ENCODE measurements at regions of chr1 and their contacts with region 1.

Region 1: GRCh38 chr1:156500797-156501499 is 373 bp upstream of the MEF2D start:
- DNase-seq: peak; percentile 94
- ATAC-seq: peak; percentile 65
- H3K4me3 Mint-ChIP-seq: peak overlapping the region; percentile 94
- H3K27ac Mint-ChIP-seq: peak overlapping the region; percentile 97
- H3K4me1 Mint-ChIP-seq: peaks cover 78% of the 10 kb centered on the region
- H3K27me3 Mint-ChIP-seq: no peaks in the 10 kb centered on the region
- CTCF ChIP-seq: no peak

Region 2: DNA sequence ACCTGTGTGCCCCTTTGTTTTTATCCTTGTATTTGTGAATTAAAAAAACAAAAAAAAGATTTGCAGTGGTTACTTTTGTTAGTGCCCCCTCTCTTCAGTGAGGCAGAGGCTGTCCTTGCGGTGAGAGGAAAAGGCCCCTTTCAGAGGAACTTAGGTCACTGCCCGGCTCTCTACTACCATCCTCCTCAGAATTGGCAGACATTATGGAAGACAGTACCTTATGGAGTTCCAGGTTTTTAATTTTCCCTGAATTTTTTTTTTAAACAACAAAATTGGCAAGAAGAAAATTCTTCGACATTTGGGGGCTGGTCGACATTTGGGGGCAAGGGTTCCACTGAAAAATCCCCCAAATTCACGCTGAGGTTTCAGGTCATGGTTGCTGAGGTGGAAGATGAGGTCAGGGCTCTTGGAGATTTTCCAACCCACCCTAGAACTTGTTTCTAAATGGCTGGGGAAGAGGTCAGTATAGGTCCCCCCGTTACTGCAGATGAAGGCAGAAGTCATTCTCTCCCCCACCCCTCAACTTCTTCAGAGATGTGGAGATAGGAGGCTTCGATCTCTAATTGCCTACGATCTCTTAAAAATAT is 554.2 kb before region 1 on chr1:
- CTCF ChIA-PET with region 1: no interaction called
- POLR2A ChIA-PET with region 1: interaction called, 15 read pairs
- intact Hi-C with region 1: no loop called
- DNase-seq: no peak
- ATAC-seq: peak; percentile 7
- H3K4me3 Mint-ChIP-seq: peak overlapping the region; percentile 46
- H3K27ac Mint-ChIP-seq: peak overlapping the region; percentile 92
- H3K4me1 Mint-ChIP-seq: peaks cover 60% of the 10 kb centered on the region
- H3K27me3 Mint-ChIP-seq: no peaks in the 10 kb centered on the region
- CTCF ChIP-seq: no peak

Region 3: DNA sequence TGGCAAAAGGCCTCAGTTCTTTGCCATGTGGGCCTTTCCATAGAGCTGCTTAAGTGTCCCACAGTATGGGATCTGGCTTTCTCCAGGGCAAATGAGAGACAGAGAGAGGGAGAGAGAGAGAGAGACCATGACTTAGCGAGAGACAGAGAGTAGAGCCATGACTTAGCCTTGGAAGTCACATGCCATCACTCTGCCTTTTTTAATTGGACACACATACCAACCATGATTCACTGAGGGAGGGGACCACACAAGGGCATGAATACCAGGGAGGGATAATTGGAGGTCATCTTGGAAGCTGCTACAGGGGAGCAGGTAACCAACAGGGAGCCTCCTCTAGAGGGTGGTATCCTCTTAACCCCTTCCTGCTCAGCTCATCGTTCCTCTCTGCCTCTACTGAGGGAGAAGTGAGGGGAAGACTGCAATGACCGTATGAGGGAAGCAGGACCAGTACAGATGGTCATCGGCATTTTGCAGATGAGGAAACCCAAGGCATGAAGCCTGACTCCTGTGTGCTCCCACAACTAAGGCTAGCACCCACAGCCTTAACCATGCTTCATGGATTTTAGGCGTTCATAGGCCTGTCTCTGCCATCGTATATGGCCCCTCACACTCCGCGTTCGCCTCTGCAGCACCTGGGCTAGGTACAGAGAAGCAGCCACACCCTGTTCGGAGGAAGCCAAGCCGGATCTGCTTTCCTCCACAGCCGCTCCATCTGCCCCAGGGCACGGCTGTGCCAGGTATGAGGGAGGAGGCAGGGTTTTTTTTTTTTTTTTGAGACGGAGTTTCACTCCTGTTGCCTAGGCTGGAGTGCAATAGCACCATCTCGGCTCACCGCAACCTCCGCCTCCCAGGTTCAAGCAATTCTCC is 38.9 kb before region 1 on chr1:
- CTCF ChIA-PET with region 1: interaction called, 9 read pairs
- POLR2A ChIA-PET with region 1: interaction called, 88 read pairs
- intact Hi-C with region 1: loop called (anchors 1 kb)
- DNase-seq: no peak
- ATAC-seq: no peak
- H3K4me3 Mint-ChIP-seq: no peak overlapping the region
- H3K27ac Mint-ChIP-seq: peak overlapping the region; percentile 1
- H3K4me1 Mint-ChIP-seq: peaks cover 9% of the 10 kb centered on the region
- H3K27me3 Mint-ChIP-seq: no peaks in the 10 kb centered on the region
- CTCF ChIP-seq: no peak

Region 4: GRCh38 chr1:156524481-156524869 is 23.5 kb after region 1 on chr1:
- CTCF ChIA-PET with region 1: interaction called, 3 read pairs
- POLR2A ChIA-PET with region 1: interaction called, 37 read pairs
- intact Hi-C with region 1: no loop called
- DNase-seq: no peak
- ATAC-seq: peak; percentile 20
- H3K4me3 Mint-ChIP-seq: peak overlapping the region; percentile 44
- H3K27ac Mint-ChIP-seq: peak overlapping the region; percentile 67
- H3K4me1 Mint-ChIP-seq: peaks cover 19% of the 10 kb centered on the region
- H3K27me3 Mint-ChIP-seq: no peaks in the 10 kb centered on the region
- CTCF ChIP-seq: no peak

Region 5: GRCh38 chr1:156583821-156584622 is 83.1 kb after region 1 on chr1:
- CTCF ChIA-PET with region 1: interaction called, 14 read pairs
- POLR2A ChIA-PET with region 1: interaction called, 90 read pairs
- intact Hi-C with region 1: loop called (anchors 1 kb)
- DNase-seq: no peak
- ATAC-seq: peak; percentile 54
- H3K4me3 Mint-ChIP-seq: peak overlapping the region; percentile 53
- H3K27ac Mint-ChIP-seq: peak overlapping the region; percentile 99
- H3K4me1 Mint-ChIP-seq: peaks cover 33% of the 10 kb centered on the region
- H3K27me3 Mint-ChIP-seq: no peaks in the 10 kb centered on the region
- CTCF ChIP-seq: no peak

Region 6: GRCh38 chr1:156608036-156608674 is 107.2 kb after region 1 on chr1:
- CTCF ChIA-PET with region 1: interaction called, 10 read pairs
- POLR2A ChIA-PET with region 1: interaction called, 12 read pairs
- intact Hi-C with region 1: loop called (anchors 1 kb)
- DNase-seq: no peak
- ATAC-seq: peak; percentile 78
- H3K4me3 Mint-ChIP-seq: peak overlapping the region; percentile 55
- H3K27ac Mint-ChIP-seq: peak overlapping the region; percentile 73
- H3K4me1 Mint-ChIP-seq: peaks cover 27% of the 10 kb centered on the region
- H3K27me3 Mint-ChIP-seq: peaks cover 5% of the 10 kb centered on the region
- CTCF ChIP-seq: peak; percentile 45

Region 7: DNA sequence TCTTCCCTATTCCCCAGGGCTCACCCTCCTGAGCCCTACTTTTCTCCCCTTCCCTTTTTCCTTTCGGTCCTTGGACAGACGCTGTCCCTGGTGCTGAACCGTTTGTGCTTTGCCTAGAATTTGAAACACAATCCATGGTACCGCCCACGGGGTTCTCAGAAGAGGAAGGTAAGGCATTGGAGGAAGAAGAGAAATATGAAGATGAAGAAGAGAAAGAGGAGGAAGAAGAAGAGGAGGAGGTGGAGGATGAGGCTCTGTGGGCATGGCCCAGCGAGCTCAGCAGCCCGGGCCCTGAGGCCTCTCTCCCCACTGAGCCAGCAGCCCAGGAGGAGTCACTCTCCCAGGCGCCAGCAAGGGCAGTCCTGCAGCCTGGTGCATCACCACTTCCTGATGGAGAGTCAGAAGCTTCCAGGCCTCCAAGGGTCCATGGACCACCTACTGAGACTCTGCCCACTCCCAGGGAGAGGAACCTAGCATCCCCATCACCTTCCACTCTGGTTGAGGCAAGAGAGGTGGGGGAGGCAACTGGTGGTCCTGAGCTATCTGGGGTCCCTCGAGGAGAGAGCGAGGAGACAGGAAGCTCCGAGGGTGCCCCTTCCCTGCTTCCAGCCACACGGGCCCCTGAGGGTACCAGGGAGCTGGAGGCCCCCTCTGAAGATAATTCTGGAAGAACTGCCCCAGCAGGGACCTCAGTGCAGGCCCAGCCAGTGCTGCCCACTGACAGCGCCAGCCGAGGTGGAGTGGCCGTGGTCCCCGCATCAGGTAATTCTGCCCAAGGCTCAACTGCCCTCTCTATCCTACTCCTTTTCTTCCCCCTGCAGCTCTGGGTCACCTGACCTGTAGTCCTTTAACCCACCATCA is 151.4 kb after region 1 on chr1:
- CTCF ChIA-PET with region 1: no interaction called
- POLR2A ChIA-PET with region 1: no interaction called
- intact Hi-C with region 1: no loop called
- DNase-seq: no peak
- ATAC-seq: no peak
- H3K4me3 Mint-ChIP-seq: no peak overlapping the region
- H3K27ac Mint-ChIP-seq: no peak overlapping the region
- H3K4me1 Mint-ChIP-seq: peaks cover 16% of the 10 kb centered on the region
- H3K27me3 Mint-ChIP-seq: peaks cover 78% of the 10 kb centered on the region
- CTCF ChIP-seq: no peak

Region 8: GRCh38 chr1:156751758-156752757 is 251.1 kb after region 1 on chr1:
- CTCF ChIA-PET with region 1: no interaction called
- POLR2A ChIA-PET with region 1: interaction called, 11 read pairs
- intact Hi-C with region 1: loop called (anchors 1 kb)
- DNase-seq: peak; percentile 89
- ATAC-seq: peak; percentile 85
- H3K4me3 Mint-ChIP-seq: peak overlapping the region; percentile 93
- H3K27ac Mint-ChIP-seq: peak overlapping the region; percentile 92
- H3K4me1 Mint-ChIP-seq: peaks cover 62% of the 10 kb centered on the region
- H3K27me3 Mint-ChIP-seq: no peaks in the 10 kb centered on the region
- CTCF ChIP-seq: no peak